ENCODE measurements at regions of chr3 and their contacts with region 1.

Region 1: GRCh38 chr3:119240591-119241434 is at the start of gene B4GALT4:
- DNase-seq: peak; percentile 59
- H3K4me3 ChIP-seq: peak within 1 kb of the TSS; percentile 84
- H3K27ac ChIP-seq: peak within 1 kb of the TSS; percentile 47
- H3K27me3 ChIP-seq: no peaks in the 10 kb centered on the region
- CTCF ChIP-seq: no peak
- polyA plus RNA-seq, gene B4GALT4: 24.6 and 32.6 TPM in 2 replicates

Region 2: DNA sequence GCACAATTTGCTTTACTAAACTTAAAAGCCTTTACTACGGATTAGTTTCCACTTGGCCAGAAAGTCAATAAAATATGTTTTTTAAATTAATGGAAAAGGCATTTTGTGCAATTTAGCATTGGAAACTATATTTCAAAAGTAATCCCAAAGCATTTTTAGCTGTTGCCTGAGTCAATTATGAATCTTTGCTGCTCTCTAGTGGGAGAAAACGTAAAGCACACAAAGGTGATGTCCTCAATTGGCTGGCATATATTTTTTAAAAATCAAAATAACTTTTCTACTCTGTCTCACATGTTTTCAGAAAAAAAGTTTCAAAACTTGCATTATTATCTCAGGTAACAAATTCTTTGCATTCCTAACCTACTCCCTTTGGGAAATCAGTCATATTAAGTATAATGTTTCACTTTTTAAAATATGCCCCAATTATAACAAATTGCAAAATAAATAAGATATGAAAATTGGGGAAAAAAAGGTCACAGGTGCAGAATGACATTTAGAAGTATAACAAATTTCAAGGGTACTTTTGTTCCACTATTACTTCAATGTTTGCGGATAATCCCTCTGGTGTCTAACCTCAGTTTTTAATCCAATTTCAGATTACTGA is 142.1 kb before region 1 on chr3:
- CTCF ChIA-PET with region 1: interaction called, 12 read pairs
- POLR2A ChIA-PET with region 1: no interaction called
- DNase-seq: peak; percentile 3
- H3K4me3 ChIP-seq: no peak overlapping the region
- H3K27ac ChIP-seq: no peak overlapping the region
- H3K27me3 ChIP-seq: no peaks in the 10 kb centered on the region
- CTCF ChIP-seq: peak; percentile 71

Region 3: DNA sequence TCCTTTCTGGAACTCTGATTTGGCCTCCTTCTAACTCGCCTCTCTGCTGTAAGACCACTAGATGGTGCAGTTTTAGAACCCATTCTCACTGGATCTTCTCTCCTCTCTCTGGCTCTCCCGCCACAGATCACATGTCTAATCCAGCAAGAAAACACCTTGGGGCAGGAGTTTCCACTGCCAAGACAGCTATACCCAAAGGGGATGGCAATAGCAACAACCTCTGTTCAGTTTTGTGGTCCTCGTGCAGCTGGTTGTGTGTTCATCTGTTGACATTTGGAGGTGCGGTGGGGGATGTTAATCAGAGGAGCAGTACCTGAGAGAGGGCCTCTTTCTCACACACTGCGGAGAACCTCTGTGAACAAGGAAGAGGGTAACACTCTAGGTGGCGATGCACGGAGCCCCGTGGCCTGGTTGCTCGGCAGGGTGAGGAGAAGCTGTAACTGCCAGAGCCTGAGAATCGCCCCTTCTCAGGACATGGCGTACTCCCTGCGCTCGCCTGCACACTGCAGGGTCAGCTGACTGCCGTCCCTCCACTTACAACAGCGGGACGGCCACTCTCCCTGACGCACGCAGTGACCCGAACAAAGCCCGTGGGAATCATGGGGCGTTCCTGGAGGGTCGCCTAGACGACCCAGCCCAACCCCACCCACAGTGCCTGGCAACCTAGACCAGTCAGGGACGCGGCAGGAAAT is 95.2 kb before region 1 on chr3 and contains the start of gene TEX55:
- CTCF ChIA-PET with region 1: interaction called, 138 read pairs
- POLR2A ChIA-PET with region 1: interaction called, 3 read pairs
- DNase-seq: peak; percentile 36
- H3K4me3 ChIP-seq: no peak within 1 kb of the TSS
- H3K27ac ChIP-seq: no peak within 1 kb of the TSS
- H3K27me3 ChIP-seq: no peaks in the 10 kb centered on the region
- CTCF ChIP-seq: peak; percentile 83
- polyA plus RNA-seq, gene TEX55: not detected in 2 replicates

Region 4: GRCh38 chr3:119221839-119222238 is 19.0 kb before region 1 on chr3:
- CTCF ChIA-PET with region 1: interaction called, 32 read pairs
- POLR2A ChIA-PET with region 1: interaction called, 13 read pairs
- DNase-seq: no peak
- H3K4me3 ChIP-seq: no peak overlapping the region
- H3K27ac ChIP-seq: no peak overlapping the region
- H3K27me3 ChIP-seq: no peaks in the 10 kb centered on the region
- CTCF ChIP-seq: no peak

Region 5: GRCh38 chr3:119227070-119227850 is 13.6 kb before region 1 on chr3:
- CTCF ChIA-PET with region 1: interaction called, 32 read pairs
- POLR2A ChIA-PET with region 1: interaction called, 13 read pairs
- DNase-seq: no peak
- H3K4me3 ChIP-seq: no peak overlapping the region
- H3K27ac ChIP-seq: no peak overlapping the region
- H3K27me3 ChIP-seq: no peaks in the 10 kb centered on the region
- CTCF ChIP-seq: no peak

Region 6: DNA sequence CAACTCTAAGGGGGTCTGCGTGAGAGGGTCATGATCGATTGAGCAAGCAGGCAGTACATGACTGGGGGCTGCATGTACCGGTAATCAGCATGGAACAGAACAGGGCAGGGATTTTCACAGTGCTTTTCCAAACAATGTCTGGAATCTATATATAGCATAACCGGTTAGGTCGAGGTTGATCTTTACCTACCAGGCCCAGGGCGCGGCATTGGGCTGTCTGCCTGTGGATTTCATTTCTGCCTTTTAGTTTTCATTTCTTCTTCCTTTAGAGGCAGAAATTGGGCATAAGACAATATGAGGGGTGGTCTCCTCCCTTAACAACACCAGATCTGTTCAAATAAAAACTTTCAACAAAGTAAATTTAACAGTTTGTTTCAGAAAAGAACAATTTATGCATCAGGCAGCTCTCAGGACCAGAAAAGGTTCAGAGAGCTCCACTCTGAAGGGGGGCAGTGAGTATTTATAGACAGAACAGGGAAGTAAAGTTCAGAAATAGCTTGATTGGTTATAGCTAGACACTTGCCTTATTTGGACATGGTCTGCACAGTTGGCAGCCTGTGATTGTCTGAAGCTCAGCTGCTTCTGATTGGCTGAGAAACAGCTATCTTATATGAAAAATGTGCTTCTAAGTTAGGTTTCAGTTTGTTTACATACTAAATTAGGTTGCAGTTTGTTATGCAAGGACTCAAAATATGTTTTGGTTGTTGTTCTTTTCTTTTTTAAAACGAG is 17.0 kb after region 1 on chr3:
- CTCF ChIA-PET with region 1: interaction called, 22 read pairs
- POLR2A ChIA-PET with region 1: no interaction called
- DNase-seq: no peak
- H3K4me3 ChIP-seq: no peak overlapping the region
- H3K27ac ChIP-seq: no peak overlapping the region
- H3K27me3 ChIP-seq: no peaks in the 10 kb centered on the region
- CTCF ChIP-seq: no peak

Measured in AG04450 (cell line).